T-cell (primary cell): ENCODE measurements at regions of chr5 and their contacts with region 1.

Region 1: DNA sequence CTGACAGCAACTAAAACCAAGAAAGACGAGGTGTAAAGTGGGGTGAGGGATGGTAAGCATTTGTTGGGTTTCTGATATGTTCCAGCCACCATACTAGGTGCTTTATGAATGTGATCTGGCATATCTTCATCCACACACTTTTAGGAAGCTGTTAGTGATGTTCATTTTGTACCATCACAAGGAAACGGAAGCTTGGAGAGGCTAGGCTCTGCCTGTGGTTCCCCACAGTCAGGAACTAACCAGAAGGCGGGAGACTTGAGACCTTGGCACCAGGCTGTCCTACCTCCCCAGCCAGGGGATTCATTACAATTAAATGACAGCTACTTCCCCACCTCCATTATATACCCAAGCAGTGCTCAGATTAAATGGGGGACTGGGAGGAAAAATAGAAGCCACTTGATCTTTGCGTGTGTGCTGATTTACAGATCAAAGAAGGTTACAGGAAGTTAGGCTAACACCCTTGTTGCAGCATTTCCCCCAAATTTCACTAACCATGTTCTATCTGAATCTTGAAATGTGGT is 43.0 kb downstream of the SFXN1 start:
- DNase-seq: peak in 21 of 35 experiments; percentile 11 to 68 (median 21)
- ATAC-seq: peak; percentile 73 to 83 (median 78)
- H3K4me3 ChIP-seq: peak overlapping the region; percentile 3 to 40
- H3K4me3 Mint-ChIP-seq: peak overlapping the region; percentile 50 to 80 (median 61)
- H3K27ac ChIP-seq: peak overlapping the region; percentile 40
- H3K27ac Mint-ChIP-seq: peak overlapping the region; percentile 97
- H3K4me1 ChIP-seq: peaks cover 27 to 41% of the 10 kb centered on the region in 2 experiments
- H3K4me1 Mint-ChIP-seq: peaks cover 75 to 86% (median 84%) of the 10 kb centered on the region in 3 donors
- H3K27me3 ChIP-seq: no peaks in the 10 kb centered on the region
- H3K27me3 Mint-ChIP-seq: no peaks in the 10 kb centered on the region

Region 2: DNA sequence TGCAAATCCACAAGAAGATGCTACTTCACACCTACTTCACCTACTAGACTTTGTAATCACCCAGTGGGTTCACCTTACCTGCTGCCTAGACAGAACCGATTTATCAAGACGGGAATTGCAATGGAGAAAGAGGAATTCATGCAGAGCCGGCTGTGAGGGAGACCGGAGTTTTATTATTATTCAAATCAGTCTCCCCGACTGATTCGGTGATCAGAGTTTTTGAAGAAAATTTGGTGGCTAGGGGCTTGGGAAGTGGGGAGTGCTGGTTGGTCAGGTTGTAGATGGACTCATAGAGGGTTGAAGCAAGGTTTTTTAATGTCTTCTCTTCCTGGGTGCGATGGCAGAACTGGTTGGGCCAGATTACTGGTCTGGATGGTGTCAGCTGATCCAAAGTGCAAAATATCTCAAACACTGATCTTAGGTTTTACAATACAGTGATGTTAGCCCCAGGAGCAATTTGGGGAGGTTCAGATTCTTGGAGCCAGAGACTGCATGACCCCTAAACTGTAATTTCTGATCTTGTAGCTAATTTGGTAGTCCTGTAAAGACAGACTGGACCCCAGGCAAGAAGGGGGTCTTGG is 19.5 kb before region 1 on chr5:
- CTCF ChIA-PET with region 1: no interaction called
- POLR2A ChIA-PET with region 1: interaction called in 1 of 2 experiments, 17 read pairs
- DNase-seq: no peak
- ATAC-seq: no peak
- H3K4me3 ChIP-seq: no peak overlapping the region
- H3K4me3 Mint-ChIP-seq: no peak overlapping the region
- H3K27ac ChIP-seq: no peak overlapping the region
- H3K27ac Mint-ChIP-seq: peak overlapping the region; percentile 17 to 67
- H3K4me1 ChIP-seq: peaks cover 0 to 2% of the 10 kb centered on the region in 2 experiments
- H3K4me1 Mint-ChIP-seq: peaks cover 11 to 36% (median 29%) of the 10 kb centered on the region in 3 donors
- H3K27me3 ChIP-seq: no peaks in the 10 kb centered on the region
- H3K27me3 Mint-ChIP-seq: no peaks in the 10 kb centered on the region

Region 3: GRCh38 chr5:175813943-175814630 is 292.7 kb after region 1 on chr5:
- CTCF ChIA-PET with region 1: no interaction called
- POLR2A ChIA-PET with region 1: interaction called in 1 of 2 experiments, 10 read pairs
- DNase-seq: no peak
- ATAC-seq: no peak
- H3K4me3 ChIP-seq: no peak overlapping the region
- H3K4me3 Mint-ChIP-seq: no peak overlapping the region
- H3K27ac ChIP-seq: no peak overlapping the region
- H3K27ac Mint-ChIP-seq: no peak overlapping the region
- H3K4me1 ChIP-seq: no peaks in the 10 kb centered on the region
- H3K4me1 Mint-ChIP-seq: no peaks in the 10 kb centered on the region
- H3K27me3 ChIP-seq: peaks cover 0 to 12% of the 10 kb centered on the region in 2 experiments
- H3K27me3 Mint-ChIP-seq: peaks cover 16 to 19% of the 10 kb centered on the region in 2 donors